OCI-LY7 (cell line): ENCODE measurements at regions of chr17 and their contacts with region 1.

Region 1: DNA sequence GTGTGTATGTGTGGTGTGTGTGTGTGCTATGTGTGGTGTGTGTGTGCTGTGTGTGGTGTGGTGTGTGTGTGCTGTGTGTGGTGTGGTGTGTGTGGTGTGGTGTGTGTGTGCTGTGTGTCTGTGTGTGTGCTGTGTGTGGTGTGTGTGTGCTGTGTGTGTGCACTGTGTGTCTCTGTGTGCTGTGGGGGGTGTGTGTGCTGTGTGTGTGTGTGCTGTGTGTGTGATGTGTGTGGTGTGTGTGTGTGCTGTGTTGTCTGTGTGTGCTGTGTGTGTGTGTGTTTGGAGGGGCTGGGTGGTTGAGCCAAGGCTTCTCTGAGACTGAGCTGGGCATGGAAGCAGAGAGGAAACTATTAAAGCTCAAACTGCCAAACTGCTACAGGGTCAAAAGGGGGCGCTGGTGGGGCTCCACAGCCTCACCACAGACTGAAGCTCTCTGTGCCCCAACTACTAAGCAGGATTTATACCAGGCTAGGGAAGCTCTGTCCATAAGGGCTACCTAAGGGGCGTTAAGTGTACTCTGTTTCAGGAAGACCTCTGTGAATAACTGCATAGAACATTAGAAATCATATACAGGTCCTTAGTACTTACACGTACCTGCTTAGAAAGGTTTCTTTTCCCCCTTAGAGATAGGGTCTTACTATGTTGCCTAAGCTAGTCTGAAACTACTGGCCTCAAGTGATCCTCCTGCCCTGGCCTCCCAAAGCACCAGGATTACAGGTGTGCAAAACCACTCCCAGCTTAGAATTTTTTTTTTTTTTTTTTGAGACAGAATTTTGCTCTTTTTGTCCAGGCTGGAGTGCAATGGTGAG is 27.8 kb upstream of the GHDC start:
- DNase-seq: peak; percentile 66
- H3K4me3 ChIP-seq: no peak overlapping the region
- H3K27ac ChIP-seq: no peak overlapping the region
- H3K4me1 ChIP-seq: no peaks in the 10 kb centered on the region
- CTCF ChIP-seq: peak; percentile 87

Region 2: GRCh38 chr17:42276359-42276608 is 54.1 kb after region 1 on chr17 and contains the start of gene STAT5B:
- CTCF ChIA-PET with region 1: interaction called, 3 read pairs
- POLR2A ChIA-PET with region 1: no interaction called
- intact Hi-C with region 1: loop called (anchors 10 kb)
- DNase-seq: peak; percentile 89
- H3K4me3 ChIP-seq: peak within 1 kb of the TSS; percentile 91
- H3K27ac ChIP-seq: no peak within 1 kb of the TSS
- H3K4me1 ChIP-seq: peaks cover 46% of the 10 kb centered on the region
- CTCF ChIP-seq: no peak
- total RNA-seq, gene STAT5B: 32.4 and 33.3 TPM in 2 replicates